ENCODE measurements at regions of chr17 and their contacts with region 1.

Region 1: GRCh38 chr17:79749156-79749815 is 18.5 kb downstream of the ENPP7 start:
- DNase-seq: no peak
- ATAC-seq: no peak
- H3K4me3 ChIP-seq: no peak overlapping the region
- H3K27ac ChIP-seq: no peak overlapping the region
- H3K4me1 ChIP-seq: peaks cover 0 to 22% (median 11%) of the 10 kb centered on the region in 9 donors
- H3K27me3 ChIP-seq: peaks cover 19 to 94% (median 84%) of the 10 kb centered on the region in 7 donors
- CTCF ChIP-seq: no peak

Region 2: DNA sequence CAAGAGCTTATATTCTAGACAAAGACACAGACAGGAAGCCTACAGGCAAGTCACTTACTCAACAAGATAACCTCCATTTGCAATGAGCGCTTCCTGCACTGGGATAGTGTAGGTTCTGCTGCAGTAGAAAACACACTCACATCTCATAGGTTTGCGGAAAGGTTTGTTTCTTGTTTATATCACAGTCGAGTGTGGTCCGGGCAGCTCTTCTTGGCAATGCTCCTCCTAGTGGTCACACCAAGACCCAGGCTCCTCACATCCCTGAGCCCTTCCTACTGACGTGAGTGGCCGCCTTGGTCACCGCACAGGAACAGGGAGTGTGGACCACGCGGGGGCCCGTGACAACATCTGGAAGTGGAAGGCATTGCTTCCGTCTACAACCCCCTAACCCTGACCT is 90.5 kb before region 1 on chr17:
- intact Hi-C with region 1: no loop called
- DNase-seq: no peak
- ATAC-seq: no peak
- H3K4me3 ChIP-seq: no peak overlapping the region
- H3K27ac ChIP-seq: no peak overlapping the region
- H3K4me1 ChIP-seq: peaks cover 0 to 8% (median 0%) of the 10 kb centered on the region in 9 donors
- H3K27me3 ChIP-seq: peaks cover 0 to 51% (median 31%) of the 10 kb centered on the region in 7 donors
- CTCF ChIP-seq: peak in 7 of 9 donors; percentile 32 to 49 (median 40)

Region 3: DNA sequence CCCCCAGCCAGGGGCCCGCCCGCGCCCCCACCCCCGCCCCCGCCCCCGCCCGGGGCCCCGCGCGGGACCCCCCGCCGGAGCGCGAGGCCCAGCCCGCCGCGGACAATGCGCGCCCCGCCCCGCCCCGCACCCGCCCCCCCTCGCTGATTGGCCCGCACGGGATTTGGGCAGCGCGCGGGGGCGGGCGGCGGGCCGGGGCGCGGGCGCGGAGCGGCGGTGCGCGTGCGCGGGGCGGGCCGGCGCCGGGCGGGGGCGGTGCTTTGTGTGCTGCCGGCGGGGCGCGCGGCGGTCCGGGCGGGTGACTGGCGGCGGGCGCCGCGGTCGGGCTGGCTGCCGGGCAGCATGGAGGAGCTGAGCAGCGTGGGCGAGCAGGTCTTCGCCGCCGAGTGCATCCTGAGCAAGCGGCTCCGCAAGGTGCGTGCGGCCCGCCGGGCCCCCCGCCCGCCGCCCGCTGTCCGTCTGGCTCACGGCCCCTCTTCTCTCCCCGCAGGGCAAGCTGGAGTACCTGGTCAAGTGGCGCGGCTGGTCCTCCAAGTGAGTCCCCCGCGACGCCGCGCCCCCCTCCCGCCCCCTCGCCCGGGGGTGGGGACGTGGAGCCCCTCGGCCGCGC is 28.7 kb after region 1 on chr17 and contains the start of gene CBX2:
- intact Hi-C with region 1: loop called in 2 of 10 experiments (anchors 2 to 5 kb)
- DNase-seq: peak; percentile 78 to 88
- ATAC-seq: peak; percentile 38 to 82 (median 70)
- H3K4me3 ChIP-seq: peak within 1 kb of the TSS; percentile 63 to 87 (median 77)
- H3K27ac ChIP-seq: peak within 1 kb of the TSS; percentile 2 to 85 (median 77)
- H3K4me1 ChIP-seq: peaks cover 0 to 48% (median 21%) of the 10 kb centered on the region in 9 donors
- H3K27me3 ChIP-seq: peaks cover 0 to 79% (median 38%) of the 10 kb centered on the region in 7 donors
- CTCF ChIP-seq: no peak
- total RNA-seq, gene CBX2: 1.5 to 3.9 (median 2.7) TPM

Region 4: DNA sequence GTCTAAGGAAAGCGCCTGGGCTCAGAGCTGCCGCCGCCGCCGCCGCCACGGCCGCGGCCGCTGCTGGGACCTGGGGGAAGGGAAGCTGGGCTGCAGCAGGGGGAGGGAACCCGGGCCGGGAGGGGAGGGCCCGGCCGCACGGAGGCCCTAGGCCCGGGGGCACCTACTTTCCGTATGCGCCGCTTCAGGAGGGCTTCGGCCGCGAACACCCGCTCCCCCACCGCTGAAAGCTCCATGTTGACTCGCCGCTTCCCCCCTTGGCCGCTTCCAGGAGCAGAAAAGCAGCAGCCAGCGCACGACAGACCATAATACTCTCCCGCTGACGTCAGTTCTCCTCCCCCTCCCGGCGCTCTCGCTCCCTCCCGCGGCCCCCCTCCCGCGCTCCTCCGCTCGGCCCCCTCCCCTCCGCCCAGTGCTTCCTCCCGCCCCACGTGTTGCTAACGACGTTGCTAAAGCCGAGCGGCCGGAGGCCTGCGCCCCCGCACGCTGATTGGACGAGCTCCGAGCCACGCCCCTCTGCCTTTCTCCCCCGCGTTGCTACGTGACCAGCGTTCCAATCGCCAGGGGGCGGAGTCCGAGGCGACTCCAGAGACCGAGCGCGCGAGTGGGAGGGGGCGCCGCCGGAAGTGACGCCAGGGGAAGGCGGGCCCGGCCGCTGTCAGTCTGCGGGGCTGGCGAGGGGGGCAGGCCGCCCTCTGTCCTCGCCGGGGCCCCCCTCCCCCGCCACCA is 47.6 kb after region 1 on chr17 and contains the start of gene CBX8:
- intact Hi-C with region 1: loop called in 1 of 10 experiments (anchors 5 kb)
- DNase-seq: peak; percentile 100
- ATAC-seq: peak; percentile 92 to 99 (median 97)
- H3K4me3 ChIP-seq: peak within 1 kb of the TSS; percentile 51 to 81 (median 76)
- H3K27ac ChIP-seq: peak within 1 kb of the TSS; percentile 76 to 92 (median 85)
- H3K4me1 ChIP-seq: peaks cover 35 to 72% (median 52%) of the 10 kb centered on the region in 9 donors
- H3K27me3 ChIP-seq: peaks cover 42 to 73% (median 65%) of the 10 kb centered on the region in 7 donors
- CTCF ChIP-seq: peak in 6 of 9 donors; percentile 18 to 56 (median 39)
- total RNA-seq, gene CBX8: 4.3 to 9.3 (median 5.6) TPM

Region 5: DNA sequence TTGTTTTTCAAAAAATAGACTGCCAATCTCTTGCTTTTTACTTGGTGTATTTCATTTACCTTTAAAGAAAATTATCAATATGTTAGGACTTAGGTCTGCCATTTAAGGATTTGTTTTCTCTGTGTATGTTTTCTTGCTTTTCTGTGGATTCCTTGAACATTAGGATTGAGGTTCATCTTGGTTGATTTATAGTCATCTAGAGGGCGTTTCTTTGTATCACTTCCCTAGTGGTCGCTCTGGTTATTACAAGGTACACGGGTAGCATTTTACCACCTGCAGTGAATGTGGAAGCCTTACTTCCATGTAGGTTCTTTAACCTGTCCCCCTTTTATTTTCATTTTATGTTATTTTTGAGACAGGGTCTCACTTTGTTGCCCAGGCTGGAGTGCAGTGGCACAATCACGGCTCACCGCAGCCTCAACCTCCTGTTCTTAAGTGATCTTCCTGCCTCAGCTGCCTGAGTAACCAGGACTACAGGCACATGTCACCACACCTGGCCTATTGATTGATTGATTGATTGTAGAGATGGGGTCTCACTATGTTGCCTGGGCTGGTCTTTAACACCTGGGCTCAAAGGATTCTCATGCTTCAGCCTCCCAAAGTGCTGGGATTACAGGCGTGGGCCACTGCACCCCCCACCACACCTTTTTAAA is 125.2 kb after region 1 on chr17:
- intact Hi-C with region 1: no loop called
- DNase-seq: no peak
- ATAC-seq: no peak
- H3K4me3 ChIP-seq: no peak overlapping the region
- H3K27ac ChIP-seq: no peak overlapping the region
- H3K4me1 ChIP-seq: no peaks in the 10 kb centered on the region
- H3K27me3 ChIP-seq: peaks cover 0 to 37% (median 18%) of the 10 kb centered on the region in 7 donors
- CTCF ChIP-seq: peak in 8 of 9 donors; percentile 12 to 56 (median 50)

Measured in heart right ventricle (tissue), 16 donors.